SK-N-SH (cell line): ENCODE measurements at regions of chrX and their contacts with region 1.

Region 1: DNA sequence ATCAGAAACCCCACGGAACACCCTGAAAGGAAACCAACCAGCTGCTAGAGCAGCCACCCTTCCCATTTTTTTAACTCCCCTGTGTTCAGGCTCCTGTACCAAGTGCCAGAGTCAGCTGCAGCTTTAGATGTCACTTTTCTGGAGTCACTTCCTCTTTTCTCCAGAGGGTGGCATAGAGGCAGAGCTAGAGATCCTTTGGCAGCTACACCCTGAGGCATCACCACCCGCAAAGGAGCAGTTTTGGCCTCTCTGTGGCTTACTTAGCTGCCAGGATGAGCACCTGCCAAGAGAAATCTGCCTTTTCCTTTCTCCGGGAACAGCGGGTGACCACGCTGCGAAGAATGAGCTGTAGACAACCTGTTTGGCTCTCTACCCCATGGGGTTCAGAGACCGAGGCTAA is 58.0 kb upstream of the CHRDL1 start:
- DNase-seq: peak; percentile 20
- H3K4me3 ChIP-seq: no peak overlapping the region
- H3K27ac ChIP-seq: no peak overlapping the region
- H3K4me1 ChIP-seq: no peaks in the 10 kb centered on the region
- H3K27me3 ChIP-seq: no peaks in the 10 kb centered on the region
- CTCF ChIP-seq: peak; percentile 37
- EP300 ChIP-seq: no peak
- RAD21 ChIP-seq: peak; percentile 48

Region 2: DNA sequence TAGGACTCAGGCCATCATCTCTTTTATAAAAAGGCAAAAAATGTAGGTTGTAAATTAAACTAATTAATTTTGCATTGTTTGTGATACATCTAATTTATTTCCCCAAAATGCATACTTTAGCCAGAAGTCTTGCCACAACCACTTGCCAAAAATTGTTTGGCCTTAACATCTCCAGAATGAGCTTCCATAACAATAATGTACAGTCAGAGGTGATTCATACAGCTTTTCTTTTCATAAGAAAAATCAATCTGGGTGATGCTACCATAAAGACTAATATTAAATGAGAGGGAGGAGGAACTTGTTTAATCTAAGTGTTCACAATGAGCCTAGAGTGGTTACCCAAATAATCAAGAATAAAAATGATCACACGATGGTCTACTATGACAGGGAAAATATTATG is 595.1 kb before region 1 on chrX:
- CTCF ChIA-PET with region 1: no interaction called
- POLR2A ChIA-PET with region 1: no interaction called
- DNase-seq: no peak
- H3K4me3 ChIP-seq: no peak overlapping the region
- H3K27ac ChIP-seq: no peak overlapping the region
- H3K4me1 ChIP-seq: no peaks in the 10 kb centered on the region; a peak in 1 of 4 replicates
- H3K27me3 ChIP-seq: no peaks in the 10 kb centered on the region
- CTCF ChIP-seq: no peak
- EP300 ChIP-seq: no peak
- RAD21 ChIP-seq: no peak

Region 3: GRCh38 chrX:110871839-110872238 is 18.2 kb after region 1 on chrX:
- CTCF ChIA-PET with region 1: interaction called, 10 read pairs
- POLR2A ChIA-PET with region 1: no interaction called
- DNase-seq: no peak
- H3K4me3 ChIP-seq: no peak overlapping the region
- H3K27ac ChIP-seq: no peak overlapping the region
- H3K4me1 ChIP-seq: no peaks in the 10 kb centered on the region
- H3K27me3 ChIP-seq: no peaks in the 10 kb centered on the region
- CTCF ChIP-seq: no peak
- EP300 ChIP-seq: no peak
- RAD21 ChIP-seq: no peak